Naive thymus-derived CD8-positive, alpha-beta T cell (primary cell): ENCODE measurements at regions of chr11 and their contacts with region 1.

Region 1: GRCh38 chr11:119018074-119018938 is at the starts of genes RPS25 and TRAPPC4:
- DNase-seq: peak; percentile 93 to 98 (median 94)
- ATAC-seq: peak; percentile 85 to 86
- H3K4me3 Mint-ChIP-seq: peak within 1 kb of the TSS; percentile 97 to 100 (median 98)
- H3K27ac Mint-ChIP-seq: peak within 1 kb of the TSS; percentile 98 to 100 (median 100)
- H3K4me1 Mint-ChIP-seq: peaks cover 16 to 69% (median 56%) of the 10 kb centered on the region in 4 donors
- H3K27me3 Mint-ChIP-seq: no peaks in the 10 kb centered on the region
- polyA plus RNA-seq, gene RPS25: 5,252 to 6,742 (median 6,279) TPM
- polyA plus RNA-seq, gene TRAPPC4: 73.0 to 97.6 (median 86.1) TPM

Region 2: DNA sequence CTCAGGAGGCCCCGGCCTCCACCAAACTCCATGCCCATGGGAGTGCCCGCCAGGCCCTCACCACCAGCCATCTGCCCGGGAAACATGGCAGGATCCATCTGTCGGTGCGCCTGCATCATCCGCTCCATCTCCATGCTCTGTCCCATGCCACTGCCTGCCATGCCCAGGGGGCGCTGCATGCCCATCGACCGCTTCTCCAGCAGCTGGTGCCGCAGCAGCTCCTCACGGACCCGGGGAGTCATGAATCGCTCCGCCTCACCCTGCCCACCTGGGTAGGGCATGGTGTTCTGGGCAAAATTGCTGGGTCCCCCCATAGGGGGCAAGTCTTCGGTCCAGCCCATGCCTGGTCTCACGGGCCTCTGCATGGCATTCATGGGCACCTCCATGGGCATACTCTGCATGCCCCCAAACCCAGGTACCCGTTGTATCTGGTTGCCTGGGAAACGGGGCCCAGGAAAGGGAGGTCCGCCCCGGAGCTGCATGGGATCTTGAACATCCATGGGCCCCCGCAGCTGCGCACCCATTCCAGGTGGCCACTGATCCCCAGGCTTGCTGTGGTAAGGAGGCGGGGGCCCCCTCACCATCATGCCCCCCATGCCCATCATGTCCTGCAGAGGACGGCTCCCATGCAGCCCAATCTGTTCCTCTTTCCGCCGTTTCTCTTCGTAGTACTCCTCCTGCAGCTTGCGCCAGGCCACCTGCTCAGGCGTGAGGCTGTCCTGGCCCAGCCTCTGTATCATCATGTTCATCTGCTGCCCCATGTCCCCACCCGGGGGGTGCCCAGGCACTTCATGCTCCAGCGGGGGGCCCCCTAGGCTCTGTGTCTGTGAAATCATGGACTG is 116.6 kb before region 1 on chr11:
- POLR2A ChIA-PET with region 1: no interaction called
- DNase-seq: no peak
- ATAC-seq: no peak
- H3K4me3 Mint-ChIP-seq: no peak overlapping the region
- H3K27ac Mint-ChIP-seq: peak overlapping the region; percentile 41 to 92 (median 80)
- H3K4me1 Mint-ChIP-seq: peaks cover 21 to 66% (median 41%) of the 10 kb centered on the region in 4 donors
- H3K27me3 Mint-ChIP-seq: no peaks in the 10 kb centered on the region

Region 3: GRCh38 chr11:118928108-118928870 is 90.0 kb before region 1 on chr11:
- POLR2A ChIA-PET with region 1: interaction called, 14 read pairs
- DNase-seq: peak; percentile 85 to 99 (median 98)
- ATAC-seq: peak; percentile 56 to 70
- H3K4me3 Mint-ChIP-seq: peak overlapping the region; percentile 93 to 99 (median 96)
- H3K27ac Mint-ChIP-seq: peak overlapping the region; percentile 96 to 100 (median 100)
- H3K4me1 Mint-ChIP-seq: peaks cover 37 to 61% (median 51%) of the 10 kb centered on the region in 4 donors
- H3K27me3 Mint-ChIP-seq: peaks cover 0 to 2% (median 0%) of the 10 kb centered on the region in 5 donors

Region 4: GRCh38 chr11:118997627-118998387 is 20.5 kb before region 1 on chr11 and contains the start of gene CENATAC:
- POLR2A ChIA-PET with region 1: interaction called, 59 read pairs
- DNase-seq: peak; percentile 90 to 96 (median 94)
- ATAC-seq: peak; percentile 93
- H3K4me3 Mint-ChIP-seq: peak within 1 kb of the TSS; percentile 88 to 99 (median 98)
- H3K27ac Mint-ChIP-seq: peak within 1 kb of the TSS; percentile 89 to 99 (median 97)
- H3K4me1 Mint-ChIP-seq: peaks cover 13 to 48% (median 45%) of the 10 kb centered on the region in 4 donors
- H3K27me3 Mint-ChIP-seq: no peaks in the 10 kb centered on the region
- polyA plus RNA-seq, gene CENATAC: 6.1 to 9.1 (median 8.7) TPM

Region 5: DNA sequence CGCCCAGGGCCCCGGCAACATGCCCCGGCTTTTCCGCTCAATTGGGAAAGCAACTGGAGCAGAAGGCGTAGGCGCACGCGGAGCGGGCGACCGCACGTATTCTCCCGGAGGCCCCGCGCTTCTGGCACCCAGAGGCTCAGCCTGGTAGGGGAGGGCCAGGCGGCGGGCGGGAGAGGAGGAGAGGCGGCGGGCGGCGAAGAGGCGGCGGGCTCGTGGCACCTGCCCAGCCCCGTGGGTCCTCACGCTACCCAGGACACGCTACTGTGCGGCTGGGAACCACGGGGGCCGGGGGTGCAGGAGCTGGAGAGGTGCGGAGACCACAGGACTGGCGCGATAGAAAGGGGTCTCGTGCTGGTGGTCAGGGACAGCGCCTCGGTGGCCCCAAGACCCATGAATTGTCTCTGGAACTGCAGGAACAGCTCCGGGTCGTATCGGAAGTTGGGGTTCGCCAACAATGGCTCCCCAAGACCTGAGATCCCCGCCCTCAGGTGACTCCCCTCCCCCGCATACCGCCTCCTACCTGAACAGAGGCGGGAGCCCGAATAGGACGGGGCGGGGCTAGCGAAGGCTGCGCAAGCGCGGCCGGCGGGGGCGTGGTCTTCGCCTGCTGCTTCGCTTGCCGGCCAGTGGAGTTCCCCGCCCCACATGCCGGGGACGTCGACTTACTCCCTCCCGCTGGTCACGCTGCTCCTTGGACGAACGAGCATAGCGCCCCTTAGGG is 12.2 kb after region 1 on chr11 and contains the start of gene SLC37A4:
- POLR2A ChIA-PET with region 1: interaction called, 82 read pairs
- DNase-seq: peak; percentile 96 to 99 (median 98)
- ATAC-seq: peak; percentile 87 to 89
- H3K4me3 Mint-ChIP-seq: peak within 1 kb of the TSS; percentile 76 to 94 (median 90)
- H3K27ac Mint-ChIP-seq: peak within 1 kb of the TSS; percentile 37 to 96 (median 88)
- H3K4me1 Mint-ChIP-seq: peaks cover 16 to 22% (median 20%) of the 10 kb centered on the region in 4 donors
- H3K27me3 Mint-ChIP-seq: no peaks in the 10 kb centered on the region
- polyA plus RNA-seq, gene SLC37A4: 9.7 to 12.8 (median 12.1) TPM

Region 6: DNA sequence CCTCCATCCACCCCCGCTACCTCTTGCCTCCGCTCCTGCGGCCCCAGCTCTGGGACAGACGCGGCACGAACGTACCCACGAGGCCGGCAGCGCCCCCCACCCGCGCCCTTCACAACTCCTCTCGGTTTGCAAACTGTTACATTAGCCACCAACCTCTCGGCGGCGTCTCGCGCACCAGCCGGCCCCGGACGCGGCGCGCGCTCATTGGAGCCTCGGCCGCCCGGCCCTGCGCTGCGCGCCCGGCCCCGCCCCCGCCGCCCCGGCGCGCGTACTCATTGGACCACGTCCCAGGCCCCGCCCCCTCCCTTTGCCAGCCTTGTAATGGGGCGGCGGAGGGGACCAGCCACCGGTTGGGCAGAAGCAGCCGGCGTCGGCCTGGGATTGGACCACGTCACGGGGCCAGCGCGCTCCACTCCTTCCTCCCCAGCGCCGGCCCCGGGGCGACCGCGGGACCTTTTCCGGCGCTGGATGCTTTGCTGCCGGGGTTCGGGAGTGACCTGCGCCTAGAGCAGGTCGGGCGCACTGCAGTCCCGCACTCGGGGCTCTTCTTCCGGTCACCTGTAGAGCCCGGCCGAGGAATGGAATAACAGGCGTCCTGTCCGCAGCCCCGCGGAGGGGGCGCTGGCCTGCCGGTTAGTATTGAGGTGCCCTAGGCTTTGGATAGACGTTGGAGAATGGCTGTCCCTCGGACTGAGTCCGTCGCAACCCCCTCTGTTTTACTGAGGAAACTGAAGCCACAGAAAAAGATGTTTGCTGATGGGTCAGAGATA is 38.9 kb after region 1 on chr11 and contains the start of gene HYOU1:
- POLR2A ChIA-PET with region 1: interaction called, 20 read pairs
- DNase-seq: peak; percentile 92 to 100 (median 98)
- ATAC-seq: peak; percentile 90 to 93
- H3K4me3 Mint-ChIP-seq: peak within 1 kb of the TSS; percentile 91 to 99 (median 96)
- H3K27ac Mint-ChIP-seq: peak within 1 kb of the TSS; percentile 93 to 99 (median 97)
- H3K4me1 Mint-ChIP-seq: peaks cover 18 to 47% (median 36%) of the 10 kb centered on the region in 4 donors
- H3K27me3 Mint-ChIP-seq: no peaks in the 10 kb centered on the region
- polyA plus RNA-seq, gene HYOU1: 14.1 to 17.1 (median 15.8) TPM

Region 7: DNA sequence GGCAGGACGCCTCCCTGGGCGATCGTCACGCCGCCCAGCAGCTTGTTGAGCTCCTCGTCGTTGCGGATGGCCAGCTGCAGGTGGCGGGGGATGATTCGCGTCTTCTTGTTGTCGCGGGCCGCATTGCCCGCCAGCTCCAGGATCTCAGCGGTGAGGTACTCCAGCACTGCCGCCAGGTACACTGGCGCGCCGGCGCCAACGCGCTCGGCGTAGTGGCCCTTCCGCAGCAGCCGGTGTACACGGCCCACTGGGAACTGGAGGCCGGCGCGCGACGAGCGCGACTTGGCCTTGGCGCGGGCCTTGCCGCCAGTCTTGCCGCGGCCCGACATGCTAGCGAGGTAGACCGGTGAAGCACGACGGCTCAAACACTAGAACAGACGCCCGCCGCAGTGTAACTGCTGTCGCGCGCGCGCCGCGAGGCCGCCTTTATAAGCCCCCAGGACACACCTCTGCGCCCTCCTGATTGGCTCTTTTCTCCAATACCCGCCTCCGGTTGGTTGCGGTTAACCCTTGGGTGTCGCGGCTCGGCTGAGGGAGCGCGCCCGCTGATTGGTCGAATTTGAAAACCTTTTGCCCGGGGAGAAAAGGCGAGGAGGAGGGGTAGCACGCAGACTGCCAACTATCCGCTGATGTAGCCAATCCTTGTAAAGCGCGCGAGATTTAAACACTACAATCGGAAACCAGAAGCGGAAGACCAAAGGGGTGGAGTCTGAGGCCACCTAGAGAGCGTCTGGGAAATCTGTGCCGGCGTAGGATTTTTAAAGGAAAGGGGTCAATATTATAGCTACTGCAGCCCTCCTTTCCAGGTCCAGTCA is 77.0 kb after region 1 on chr11:
- POLR2A ChIA-PET with region 1: interaction called, 14 read pairs
- DNase-seq: peak; percentile 96 to 100 (median 100)
- ATAC-seq: peak; percentile 88 to 91
- H3K4me3 Mint-ChIP-seq: peak overlapping the region; percentile 89 to 95 (median 92)
- H3K27ac Mint-ChIP-seq: peak overlapping the region; percentile 79 to 98 (median 93)
- H3K4me1 Mint-ChIP-seq: peaks cover 24 to 42% (median 37%) of the 10 kb centered on the region in 4 donors
- H3K27me3 Mint-ChIP-seq: peaks cover 0 to 3% (median 0%) of the 10 kb centered on the region in 5 donors

Region 8: GRCh38 chr11:119101759-119102423 is 83.6 kb after region 1 on chr11 and contains the start of gene DPAGT1:
- POLR2A ChIA-PET with region 1: interaction called, 16 read pairs
- DNase-seq: peak; percentile 66 to 92 (median 80)
- ATAC-seq: peak; percentile 86 to 87
- H3K4me3 Mint-ChIP-seq: peak within 1 kb of the TSS; percentile 91 to 99 (median 97)
- H3K27ac Mint-ChIP-seq: peak within 1 kb of the TSS; percentile 96 to 100 (median 100)
- H3K4me1 Mint-ChIP-seq: peaks cover 18 to 59% (median 47%) of the 10 kb centered on the region in 4 donors
- H3K27me3 Mint-ChIP-seq: no peaks in the 10 kb centered on the region
- polyA plus RNA-seq, gene DPAGT1: 28.7 to 30.8 (median 29.0) TPM